Brain microvascular endothelial cell (primary cell): ENCODE measurements at regions of chr1 and their contacts with region 1.

Region 1: GRCh38 chr1:168637350-168637991 is 61.1 kb downstream of the XCL1 start:
- DNase-seq: no peak
- H3K4me3 ChIP-seq: no peak overlapping the region
- H3K27ac ChIP-seq: no peak overlapping the region
- H3K27me3 ChIP-seq: no peaks in the 10 kb centered on the region
- CTCF ChIP-seq: peak; percentile 74

Region 2: DNA sequence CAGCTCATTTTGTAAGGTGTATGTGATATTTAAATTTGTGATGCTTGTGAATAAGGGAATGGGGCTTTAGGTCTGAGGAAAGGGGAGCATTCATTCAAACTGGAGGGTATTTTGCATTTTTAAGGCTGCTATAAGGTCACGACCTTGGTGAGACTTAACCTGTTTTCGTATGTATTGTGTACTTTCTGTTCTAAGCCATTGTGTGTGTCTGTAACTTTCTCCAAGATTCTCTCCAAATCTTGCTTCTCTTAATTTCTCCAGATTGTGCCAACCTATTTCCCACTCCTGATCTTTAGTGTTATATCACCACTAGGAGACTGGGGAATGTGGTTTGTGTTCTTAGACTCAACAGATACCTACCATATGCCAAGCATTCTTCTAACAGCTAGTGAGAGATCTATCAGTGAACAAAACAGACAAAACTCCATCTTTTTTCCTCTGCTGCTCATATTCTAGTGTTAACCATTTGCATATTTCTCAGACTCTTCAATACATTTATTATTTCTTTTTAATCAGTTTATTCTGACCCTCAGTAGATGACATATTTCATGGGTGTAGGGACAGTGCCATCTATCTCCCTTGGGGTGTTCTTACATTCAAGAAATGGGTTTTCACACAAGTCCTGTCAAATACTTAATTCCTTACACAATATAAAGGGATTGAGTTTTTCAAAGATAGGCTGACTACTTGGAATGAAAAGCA is 496.5 kb after region 1 on chr1:
- in situ Hi-C with region 1: loop called (anchors 25 kb)
- DNase-seq: no peak
- H3K4me3 ChIP-seq: no peak overlapping the region
- H3K27ac ChIP-seq: no peak overlapping the region
- H3K27me3 ChIP-seq: no peaks in the 10 kb centered on the region
- CTCF ChIP-seq: peak; percentile 31